Activated naive CD8-positive, alpha-beta T cell treated with anti-CD3 and anti-CD28 coated beads, Interleukin-2, amount 10 ng/mL, durations not matched to agents 7 days and 5 days (primary cell): ENCODE measurements at regions of chr9 and their contacts with region 1.

Region 1: DNA sequence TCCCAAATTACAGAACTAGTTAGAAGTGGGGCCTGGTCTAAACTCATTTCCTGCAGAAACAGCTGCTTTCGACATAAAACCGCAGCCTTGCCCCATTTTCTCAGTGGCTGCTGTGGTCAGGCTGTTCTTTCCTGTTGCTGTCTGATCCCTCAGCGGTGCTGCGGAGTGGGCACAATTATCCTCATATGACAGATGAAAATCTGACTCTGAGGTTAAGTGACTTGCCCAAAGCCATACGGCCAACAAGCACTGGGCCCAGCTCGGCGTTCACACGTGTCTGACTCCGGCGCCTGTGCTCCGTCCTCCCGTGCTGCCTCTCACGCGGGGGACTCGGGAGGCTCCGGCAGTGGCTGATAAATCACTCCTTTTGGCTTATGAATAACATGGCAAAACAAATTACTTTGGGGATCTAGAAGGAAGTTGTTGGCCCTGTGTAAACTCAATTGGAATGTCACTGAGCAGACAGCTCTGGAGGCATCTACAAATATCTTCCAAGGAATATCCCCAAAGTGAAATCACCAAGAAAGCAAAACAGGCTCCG is 142.6 kb upstream of the LMX1B start:
- DNase-seq: peak; percentile 81
- ATAC-seq: peak; percentile 72
- H3K4me3 Mint-ChIP-seq: peak overlapping the region; percentile 75
- H3K27ac Mint-ChIP-seq: peak overlapping the region; percentile 96
- H3K4me1 Mint-ChIP-seq: peaks cover 70% of the 10 kb centered on the region
- H3K27me3 Mint-ChIP-seq: no peaks in the 10 kb centered on the region

Region 2: DNA sequence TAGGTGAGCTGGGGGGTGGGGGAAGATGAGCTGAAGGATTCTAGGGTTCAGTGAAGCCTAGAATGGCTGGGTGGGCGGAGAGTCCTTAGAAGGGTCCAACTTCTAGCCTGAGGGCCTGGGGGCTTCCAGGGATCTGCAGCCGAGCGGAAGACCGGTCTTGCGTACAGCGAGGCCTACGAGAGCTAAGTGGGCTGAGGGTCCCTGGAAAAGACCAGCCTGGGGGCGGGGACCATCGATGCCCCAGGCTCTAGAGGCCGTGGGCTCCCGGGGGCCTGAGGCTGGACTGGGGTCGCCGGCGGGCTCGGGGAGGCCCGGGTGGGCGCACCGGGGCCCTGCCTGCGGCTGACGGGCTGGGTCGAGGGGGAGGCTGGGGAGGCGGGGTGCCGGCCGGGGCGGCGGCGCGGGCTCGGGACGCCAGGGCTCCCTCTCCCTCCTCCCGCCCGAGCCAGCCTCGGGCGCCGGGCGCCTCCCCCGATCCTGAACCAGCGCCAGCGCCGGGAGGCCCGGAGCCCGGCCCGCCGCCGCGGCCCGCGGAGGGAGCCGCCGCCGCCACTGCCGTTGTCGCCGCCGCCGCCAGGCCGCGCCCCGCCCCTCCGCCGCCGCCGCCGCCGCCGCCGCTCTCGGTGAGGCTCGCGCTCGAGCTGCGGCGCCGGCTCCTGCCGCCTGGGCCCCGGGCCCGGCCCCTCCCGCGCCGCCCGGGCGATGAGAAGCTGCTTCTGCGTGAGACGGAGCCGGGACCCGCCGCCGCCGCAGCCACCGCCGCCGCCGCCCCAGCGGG is 144.7 kb before region 1 on chr9 and contains the start of gene MVB12B:
- POLR2A ChIA-PET with region 1: interaction called, 12 read pairs
- DNase-seq: peak; percentile 80
- ATAC-seq: peak; percentile 20
- H3K4me3 Mint-ChIP-seq: peak within 1 kb of the TSS; percentile 86
- H3K27ac Mint-ChIP-seq: peak within 1 kb of the TSS; percentile 95
- H3K4me1 Mint-ChIP-seq: peaks cover 44% of the 10 kb centered on the region
- H3K27me3 Mint-ChIP-seq: no peaks in the 10 kb centered on the region
- total RNA-seq, gene MVB12B: 33.5 to 34.1 TPM

Region 3: DNA sequence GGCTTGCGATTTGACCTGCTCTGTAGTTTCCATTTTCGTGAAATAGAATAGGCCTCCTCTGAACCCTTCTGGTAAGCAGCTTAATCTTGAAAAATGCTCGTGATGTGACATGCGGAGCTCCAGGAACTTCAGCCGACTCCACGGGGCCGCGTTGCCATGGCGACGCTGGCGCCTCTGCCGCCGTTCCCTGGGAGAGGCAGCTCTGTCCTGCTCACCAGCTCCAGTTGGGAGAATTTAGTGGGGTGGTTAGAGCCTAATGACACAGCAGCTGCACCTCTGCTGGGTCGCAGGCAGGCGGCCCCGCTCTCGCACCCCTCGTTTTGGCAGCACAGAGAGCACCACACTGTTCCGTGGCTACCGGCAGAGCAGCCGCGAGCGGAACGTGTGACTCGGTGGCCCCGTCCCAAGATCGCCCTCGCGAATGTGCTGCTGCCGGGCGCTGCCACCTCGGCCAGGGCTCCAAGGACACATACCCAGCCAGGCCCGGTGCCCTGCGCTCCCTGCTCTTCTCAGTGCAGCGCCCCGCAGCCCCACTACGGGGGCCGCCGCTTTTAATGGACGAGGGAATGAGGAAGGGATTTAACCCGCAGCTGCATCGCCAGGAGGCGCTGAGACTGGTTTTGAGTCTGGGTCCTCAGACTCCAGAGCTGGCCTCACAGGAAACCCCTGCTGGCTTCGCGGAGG is 11.3 kb after region 1 on chr9:
- POLR2A ChIA-PET with region 1: interaction called, 17 read pairs
- DNase-seq: no peak
- ATAC-seq: no peak
- H3K4me3 Mint-ChIP-seq: no peak overlapping the region
- H3K27ac Mint-ChIP-seq: no peak overlapping the region
- H3K4me1 Mint-ChIP-seq: peaks cover 14% of the 10 kb centered on the region
- H3K27me3 Mint-ChIP-seq: no peaks in the 10 kb centered on the region

Region 4: DNA sequence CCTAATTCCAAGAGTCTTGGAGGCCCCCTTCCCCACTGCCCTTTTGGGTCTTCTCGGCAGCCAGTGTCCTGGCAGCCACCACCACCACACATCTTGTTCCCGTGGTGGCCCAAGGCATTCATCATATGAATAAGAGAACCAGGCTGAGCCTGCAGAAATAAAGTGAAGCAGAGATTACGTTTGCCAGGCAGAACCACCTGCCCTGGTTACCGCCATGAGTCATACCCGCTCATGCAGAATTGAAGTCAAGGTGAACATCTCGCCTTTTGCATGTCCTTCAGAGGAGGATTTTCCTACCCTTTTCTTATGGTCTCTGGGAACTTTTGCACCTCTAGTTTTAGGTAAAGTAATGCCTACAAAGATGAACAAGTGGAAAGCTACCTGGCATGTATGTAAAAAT is 23.1 kb after region 1 on chr9:
- POLR2A ChIA-PET with region 1: no interaction called
- DNase-seq: no peak
- ATAC-seq: no peak
- H3K4me3 Mint-ChIP-seq: no peak overlapping the region
- H3K27ac Mint-ChIP-seq: no peak overlapping the region
- H3K4me1 Mint-ChIP-seq: peaks cover 14% of the 10 kb centered on the region
- H3K27me3 Mint-ChIP-seq: no peaks in the 10 kb centered on the region